ENCODE measurements at regions of chr13 and their contacts with region 1.

Region 1: DNA sequence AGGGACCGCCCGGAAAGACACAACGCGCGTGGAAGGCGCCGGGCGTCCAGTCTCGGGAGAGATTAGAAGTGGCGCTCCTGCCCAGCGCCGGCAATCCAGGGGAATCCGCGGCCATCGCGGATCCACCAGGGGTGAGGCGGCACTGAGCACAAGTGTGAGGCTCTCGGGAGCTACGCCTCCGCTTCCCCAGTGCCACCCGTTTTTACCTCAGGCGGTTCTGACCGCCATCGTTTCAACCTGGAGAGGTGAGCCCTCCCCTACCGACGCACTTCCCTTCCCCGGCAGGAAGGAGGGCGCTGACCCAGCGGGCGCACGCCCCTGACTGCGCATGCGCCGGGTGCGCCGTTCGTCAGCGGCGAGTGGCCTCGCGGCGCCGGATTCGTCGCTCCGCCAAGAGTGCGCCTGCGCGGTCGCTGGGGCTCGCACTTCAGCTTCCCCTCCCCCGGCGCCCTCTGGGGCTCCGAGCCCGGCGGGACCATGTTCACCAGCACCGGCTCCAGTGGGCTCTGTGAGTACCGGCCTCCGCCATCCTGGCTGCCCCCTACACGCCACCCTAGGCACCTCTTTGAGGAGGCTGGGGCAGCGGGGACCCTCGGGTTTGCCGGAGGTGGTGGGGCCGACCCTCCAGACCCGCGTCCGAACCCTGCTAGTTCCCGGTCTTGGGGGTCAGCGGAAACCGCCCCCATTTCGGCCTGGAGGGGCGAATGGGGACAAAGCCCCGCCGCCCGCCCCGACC is at the start of gene UBAC2:
- DNase-seq: peak; percentile 79 to 97 (median 93)

Region 2: DNA sequence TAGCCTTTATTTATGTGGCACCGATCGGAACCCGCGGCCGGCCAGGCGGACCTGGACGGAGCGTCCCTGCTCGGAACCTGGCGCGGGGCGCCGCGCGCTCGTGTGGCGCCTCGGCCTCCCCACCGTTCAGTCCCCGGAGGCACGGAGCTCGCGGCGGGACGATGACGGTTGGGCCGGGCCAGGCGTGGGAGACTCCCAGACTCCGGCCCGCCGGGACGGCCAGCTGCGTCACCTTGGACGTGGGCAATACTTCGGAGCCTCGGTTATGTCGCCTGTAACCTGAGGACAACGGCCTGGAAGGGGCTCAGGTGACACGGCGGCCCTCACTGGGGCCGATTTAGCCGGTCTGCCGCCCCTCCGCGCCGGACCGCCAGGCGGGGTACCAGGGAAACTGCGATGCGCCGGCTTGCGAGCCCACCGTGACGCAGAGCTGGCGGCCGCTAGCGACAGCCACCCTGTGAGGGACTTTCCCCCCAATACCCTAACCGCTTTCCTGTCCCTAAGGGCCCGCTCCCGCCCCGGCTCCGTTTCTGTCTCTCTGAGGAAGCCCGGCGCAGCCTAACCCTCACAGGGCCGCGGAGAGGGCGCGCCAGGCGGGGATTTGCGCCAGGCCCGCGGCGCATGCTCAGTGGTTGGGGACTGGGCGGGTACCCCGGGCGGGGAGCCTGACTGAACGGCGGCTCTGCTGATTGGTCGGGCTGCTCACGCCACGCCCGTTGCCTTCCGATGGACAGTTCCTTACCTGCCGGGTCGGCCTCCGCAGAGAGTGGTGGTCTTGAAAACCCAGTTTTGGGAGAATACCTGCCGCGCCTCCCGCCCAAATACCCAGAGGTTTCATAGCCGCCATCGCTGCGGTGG is 113.3 kb before region 1 on chr13:
- intact Hi-C with region 1: loop called (anchors 10 kb)
- DNase-seq: peak; percentile 80 to 98 (median 95)

Measured in head of caudate nucleus (tissue), 42 donors.